CD4-positive, alpha-beta T cell (primary cell): ENCODE measurements at regions of chr11 and their contacts with region 1.

Region 1: GRCh38 chr11:1778141-1778911 is 14.6 kb upstream of the CTSD start:
- DNase-seq: no peak
- ATAC-seq: no peak
- H3K4me3 ChIP-seq: no peak overlapping the region
- H3K4me3 Mint-ChIP-seq: no peak overlapping the region
- H3K27ac ChIP-seq: no peak overlapping the region
- H3K27ac Mint-ChIP-seq: no peak overlapping the region
- H3K4me1 ChIP-seq: peaks cover 11% of the 10 kb centered on the region
- H3K4me1 Mint-ChIP-seq: no peaks in the 10 kb centered on the region
- H3K27me3 ChIP-seq: peaks cover 0 to 2% of the 10 kb centered on the region in 2 experiments
- H3K27me3 Mint-ChIP-seq: no peaks in the 10 kb centered on the region
- CTCF ChIP-seq: no peak

Region 2: DNA sequence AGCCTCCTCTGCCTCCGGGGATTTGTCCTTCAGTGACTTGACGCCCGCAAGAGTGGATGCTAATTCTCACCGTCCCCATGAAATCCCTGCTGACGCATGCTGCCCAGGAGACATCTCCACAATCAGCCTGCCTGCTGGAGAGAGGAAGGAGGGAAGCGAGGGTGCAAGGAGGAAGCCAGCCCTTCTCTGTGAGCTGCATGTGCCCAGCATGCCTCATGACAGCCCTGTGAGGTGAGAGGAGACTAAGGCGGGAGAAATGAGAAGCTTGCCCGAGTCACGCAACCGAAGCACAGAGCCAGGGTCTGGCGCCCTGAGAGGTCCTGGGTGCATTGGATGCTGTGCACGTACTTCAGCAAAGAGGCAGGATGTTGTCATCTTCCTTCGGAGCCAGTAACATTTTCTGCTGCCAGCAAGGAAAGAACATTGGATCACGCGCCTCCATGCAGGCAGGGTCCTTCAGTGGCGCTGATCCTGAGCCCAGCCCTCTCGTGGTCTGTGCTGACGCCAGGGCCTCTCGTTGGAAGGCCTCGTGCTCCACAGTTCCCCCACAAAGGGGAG is 108.6 kb before region 1 on chr11:
- CTCF ChIA-PET with region 1: no interaction called
- POLR2A ChIA-PET with region 1: no interaction called
- intact Hi-C with region 1: no loop called
- DNase-seq: no peak
- ATAC-seq: no peak
- H3K4me3 ChIP-seq: no peak overlapping the region
- H3K4me3 Mint-ChIP-seq: no peak overlapping the region
- H3K27ac ChIP-seq: no peak overlapping the region
- H3K27ac Mint-ChIP-seq: no peak overlapping the region
- H3K4me1 ChIP-seq: no peaks in the 10 kb centered on the region
- H3K4me1 Mint-ChIP-seq: no peaks in the 10 kb centered on the region
- H3K27me3 ChIP-seq: peaks cover 7 to 22% of the 10 kb centered on the region in 2 experiments
- H3K27me3 Mint-ChIP-seq: peaks cover 20% of the 10 kb centered on the region
- CTCF ChIP-seq: no peak

Region 3: DNA sequence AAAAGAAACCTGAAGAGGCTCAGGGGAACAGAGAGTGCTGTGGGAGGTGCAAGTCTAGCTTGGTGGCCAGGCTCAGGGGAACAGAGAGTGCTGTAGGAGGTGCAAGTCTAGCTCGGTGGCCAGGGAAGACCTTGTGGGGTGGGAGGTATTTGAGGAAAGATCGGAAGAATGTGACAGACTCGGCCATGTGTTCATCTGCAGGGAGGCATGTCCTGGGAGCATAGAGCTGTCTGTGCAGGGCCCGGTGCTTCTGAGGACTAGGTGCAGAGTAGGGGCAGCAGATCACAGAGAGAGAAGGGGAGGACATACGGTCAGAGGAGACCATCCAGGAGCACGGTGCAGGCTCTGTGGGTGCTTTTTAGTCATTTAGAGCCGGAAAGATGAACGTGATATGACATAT is 38.8 kb before region 1 on chr11:
- CTCF ChIA-PET with region 1: no interaction called
- POLR2A ChIA-PET with region 1: no interaction called
- intact Hi-C with region 1: loop called in 1 of 2 experiments (anchors 5 kb)
- DNase-seq: no peak
- ATAC-seq: no peak
- H3K4me3 ChIP-seq: no peak overlapping the region
- H3K4me3 Mint-ChIP-seq: no peak overlapping the region
- H3K27ac ChIP-seq: no peak overlapping the region
- H3K27ac Mint-ChIP-seq: no peak overlapping the region
- H3K4me1 ChIP-seq: no peaks in the 10 kb centered on the region
- H3K4me1 Mint-ChIP-seq: no peaks in the 10 kb centered on the region
- H3K27me3 ChIP-seq: peaks cover 0 to 3% of the 10 kb centered on the region in 2 experiments
- H3K27me3 Mint-ChIP-seq: peaks cover 4% of the 10 kb centered on the region
- CTCF ChIP-seq: no peak

Region 4: GRCh38 chr11:2355000-2355644 is 576.8 kb after region 1 on chr11:
- CTCF ChIA-PET with region 1: no interaction called
- POLR2A ChIA-PET with region 1: no interaction called
- intact Hi-C with region 1: no loop called
- DNase-seq: no peak
- ATAC-seq: no peak
- H3K4me3 ChIP-seq: no peak overlapping the region
- H3K4me3 Mint-ChIP-seq: no peak overlapping the region
- H3K27ac ChIP-seq: no peak overlapping the region
- H3K27ac Mint-ChIP-seq: no peak overlapping the region
- H3K4me1 ChIP-seq: no peaks in the 10 kb centered on the region
- H3K4me1 Mint-ChIP-seq: no peaks in the 10 kb centered on the region
- H3K27me3 ChIP-seq: no peaks in the 10 kb centered on the region
- H3K27me3 Mint-ChIP-seq: no peaks in the 10 kb centered on the region
- CTCF ChIP-seq: no peak